ENCODE measurements at regions of chr17 and their contacts with region 1.

Region 1: DNA sequence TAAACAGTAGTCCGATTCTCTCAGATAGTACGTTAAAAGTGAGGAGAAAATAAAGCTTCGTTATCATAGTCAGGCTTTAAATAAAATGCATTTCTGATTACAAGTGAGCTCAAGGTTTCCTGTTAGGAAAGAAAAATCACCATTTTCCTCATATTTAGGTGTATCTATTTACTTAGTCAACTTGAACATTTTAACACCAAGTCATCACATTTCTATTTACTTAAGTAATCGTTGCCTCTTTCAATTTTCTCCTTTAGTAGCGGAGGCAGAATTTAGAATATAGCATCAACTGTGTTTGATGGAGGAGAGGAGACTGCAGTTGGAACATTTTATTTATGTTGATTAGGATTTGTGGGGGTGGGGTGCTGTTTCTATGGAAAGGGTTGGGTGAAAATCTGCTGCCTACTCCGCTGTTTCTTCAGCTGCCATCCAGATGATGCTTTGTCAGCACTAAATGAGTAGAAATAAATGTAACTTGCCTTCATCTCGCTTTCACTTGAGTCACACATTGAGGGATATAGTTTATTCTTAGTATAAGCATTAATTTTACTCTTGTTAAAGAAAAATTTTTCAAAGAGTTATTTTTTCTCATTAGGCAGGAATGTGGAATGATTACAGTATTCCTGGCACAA is 42.3 kb downstream of the ABHD15 start:
- DNase-seq: no peak
- H3K4me3 ChIP-seq: no peak overlapping the region
- H3K27ac ChIP-seq: no peak overlapping the region
- H3K4me1 ChIP-seq: no peaks in the 10 kb centered on the region
- H3K27me3 ChIP-seq: no peaks in the 10 kb centered on the region

Region 2: GRCh38 chr17:29483503-29483902 is 41.1 kb before region 1 on chr17:
- CTCF ChIA-PET with region 1: no interaction called
- POLR2A ChIA-PET with region 1: interaction called, 10 read pairs
- DNase-seq: no peak
- H3K4me3 ChIP-seq: no peak overlapping the region
- H3K27ac ChIP-seq: no peak overlapping the region
- H3K4me1 ChIP-seq: no peaks in the 10 kb centered on the region
- H3K27me3 ChIP-seq: no peaks in the 10 kb centered on the region

Measured in common myeloid progenitor, CD34-positive (primary cell).